Left ventricle myocardium superior (tissue), 1 donor: ENCODE measurements at regions of chr1 and their contacts with region 1.

Region 1: DNA sequence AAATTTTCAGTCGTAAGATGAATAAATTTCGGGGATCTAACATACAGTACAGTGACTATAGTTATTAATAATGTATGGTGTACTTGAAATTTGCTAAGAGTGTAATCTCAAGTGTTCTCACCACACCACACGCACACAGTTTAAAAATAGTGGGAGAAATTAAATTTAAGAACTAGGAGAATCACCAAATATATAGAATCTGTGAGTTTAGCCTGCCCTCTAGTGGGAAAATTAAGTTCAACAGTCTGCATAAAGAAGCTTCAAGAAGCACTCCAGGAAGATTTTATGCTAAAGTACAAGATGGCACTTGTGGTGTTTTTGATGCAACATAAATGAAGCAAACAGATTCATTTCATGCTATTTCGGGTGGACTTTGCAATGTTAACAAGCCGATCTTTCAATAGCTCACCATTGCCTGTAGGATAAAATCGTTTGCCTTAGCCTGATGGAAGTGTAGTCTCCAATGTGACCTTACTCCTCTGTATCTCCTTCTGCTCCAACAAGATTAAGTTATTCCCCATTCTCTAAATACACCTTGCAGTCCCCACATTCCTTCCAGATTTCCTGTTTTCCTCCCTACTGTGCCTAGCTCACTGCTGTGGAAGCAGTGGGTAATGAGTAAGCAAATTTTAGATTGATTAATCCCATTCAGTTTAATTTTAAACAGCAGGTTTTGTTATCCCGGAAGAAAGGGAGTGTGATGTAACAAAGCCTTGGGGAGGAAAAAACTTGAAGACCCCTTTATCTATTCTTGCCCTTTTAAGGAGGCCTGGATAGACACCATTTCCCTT is 8.7 kb upstream of the PIK3C2B start:
- DNase-seq: no peak
- ATAC-seq: no peak

Region 2: DNA sequence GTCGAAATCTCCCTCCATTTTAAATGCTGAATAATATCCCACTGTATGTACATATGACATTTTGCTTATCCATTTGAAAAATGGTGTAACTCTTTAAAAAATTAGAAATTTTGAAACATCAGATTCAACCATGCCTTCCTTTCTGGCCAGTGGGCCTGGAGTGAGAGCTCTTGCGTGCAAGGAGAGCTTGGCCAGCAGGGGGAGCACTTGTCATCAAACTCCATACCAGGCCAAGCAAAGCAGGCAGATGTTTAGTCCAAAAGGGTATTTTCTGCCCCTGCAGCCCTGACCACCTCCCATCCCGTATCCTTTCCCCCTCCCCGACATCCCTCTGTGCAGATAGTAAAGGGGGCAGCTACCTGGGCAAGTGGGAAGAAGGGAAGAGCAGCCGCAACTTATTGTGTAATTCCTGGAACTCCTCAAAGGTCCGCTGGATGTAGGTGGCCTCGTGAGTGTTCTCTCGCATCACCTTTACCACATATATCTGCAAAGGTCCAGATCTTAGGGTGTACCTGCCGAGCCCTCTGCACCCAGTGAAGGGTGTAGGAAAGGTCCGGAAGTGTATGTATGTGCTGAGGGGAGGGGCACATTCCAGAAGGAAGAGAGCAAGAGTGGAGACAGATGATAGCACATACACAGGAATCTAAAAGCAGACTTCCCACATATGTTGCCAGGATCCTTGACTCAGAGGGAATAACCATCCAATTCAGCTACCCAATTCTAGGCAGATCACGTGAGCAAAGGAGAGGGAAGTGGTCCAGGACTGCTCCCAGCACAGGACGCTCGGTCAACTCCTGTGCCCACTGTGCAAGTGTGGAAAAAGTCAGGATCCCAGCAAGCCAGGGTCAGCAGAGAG is 71.8 kb before region 1 on chr1:
- intact Hi-C with region 1: loop called (anchors 5 kb)
- DNase-seq: peak; percentile 89
- ATAC-seq: peak; percentile 67

Region 3: GRCh38 chr1:204446370-204447111 is 56.8 kb before region 1 on chr1:
- intact Hi-C with region 1: loop called (anchors 5 kb)
- DNase-seq: peak; percentile 85
- ATAC-seq: peak; percentile 63

Region 4: DNA sequence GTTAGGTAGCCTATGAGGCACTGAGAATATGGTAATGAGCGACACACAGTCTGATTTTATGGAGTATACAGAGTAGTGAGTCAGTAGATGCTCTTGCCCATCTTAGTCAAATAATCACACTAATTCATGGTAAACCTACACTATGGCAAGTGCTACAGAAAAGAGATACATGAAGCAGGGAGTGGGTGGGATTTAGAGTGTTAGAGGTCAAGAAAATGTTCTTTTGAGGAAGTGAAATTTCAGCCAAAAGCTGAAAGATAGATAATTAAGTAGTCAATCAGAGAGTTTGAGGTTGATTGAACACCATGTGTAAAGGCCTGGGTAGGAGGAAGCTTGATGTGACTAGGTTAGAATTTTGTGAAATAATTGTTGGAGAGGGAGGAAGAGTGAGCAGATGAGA is 27.6 kb after region 1 on chr1:
- intact Hi-C with region 1: no loop called
- DNase-seq: no peak
- ATAC-seq: no peak